Mammary epithelial cell (primary cell): ENCODE measurements at regions of chr18 and their contacts with region 1.

Region 1: DNA sequence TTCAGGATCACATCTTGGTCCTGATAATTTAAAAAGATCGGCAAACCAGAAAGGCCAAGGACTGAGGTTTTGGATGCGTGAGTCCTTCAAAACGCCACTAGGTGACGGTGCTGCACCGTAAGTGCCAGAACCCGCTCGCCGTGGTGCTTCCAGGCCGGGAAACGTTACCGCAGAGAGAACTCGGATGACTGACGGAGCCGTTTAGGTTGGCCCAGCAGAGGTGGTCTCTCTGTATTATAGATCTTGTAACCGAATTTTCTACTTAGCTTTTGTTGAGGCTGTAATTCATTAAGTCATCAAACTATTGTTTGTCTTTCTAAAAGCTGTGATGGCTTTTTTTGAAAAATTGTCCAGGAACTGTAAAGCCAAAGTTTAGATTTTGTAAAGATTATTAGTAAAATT is 39.8 kb upstream of the ADCYAP1 start:
- DNase-seq: peak; percentile 43
- H3K4me3 ChIP-seq: no peak overlapping the region
- H3K27ac ChIP-seq: no peak overlapping the region
- H3K4me1 ChIP-seq: peaks cover 12% of the 10 kb centered on the region
- H3K27me3 ChIP-seq: peaks cover 3% of the 10 kb centered on the region
- CTCF ChIP-seq: peak; percentile 98 to 100

Region 2: DNA sequence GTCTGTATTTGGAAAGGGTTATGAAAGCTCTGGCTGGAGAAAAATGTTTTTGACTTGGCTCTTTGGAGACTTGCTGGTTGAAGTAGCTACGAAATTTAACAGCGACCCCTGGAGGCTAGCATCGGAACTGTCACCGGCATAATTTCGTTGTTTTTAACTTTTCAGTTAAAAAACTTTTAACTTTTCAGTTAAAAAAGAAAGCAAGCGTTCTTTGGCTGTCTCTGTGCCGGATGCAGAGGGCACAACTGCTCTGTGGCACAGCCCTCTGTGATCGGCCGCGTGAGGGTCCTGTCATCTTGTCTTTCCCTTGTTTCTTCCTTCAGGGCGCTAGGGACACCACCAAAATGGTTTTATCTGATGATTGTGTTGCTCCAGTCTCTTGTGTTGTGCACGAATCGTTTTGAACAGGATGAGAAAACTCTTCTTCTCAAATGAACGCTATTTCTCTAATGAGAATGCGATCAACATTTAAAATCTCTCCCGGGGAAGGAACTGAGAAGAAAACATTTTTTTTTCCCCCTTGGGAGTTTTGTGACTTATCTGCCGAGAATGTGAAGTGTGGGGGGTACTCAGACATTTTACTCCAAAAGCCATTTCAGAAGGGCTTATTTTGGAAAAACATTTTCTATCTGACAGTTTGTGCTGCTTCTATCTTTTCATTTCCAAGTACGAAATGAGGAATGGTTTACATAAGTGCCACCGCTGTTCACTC is 96.9 kb after region 1 on chr18:
- CTCF ChIA-PET with region 1: no interaction called
- dilution Hi-C with region 1: no loop called
- in situ Hi-C with region 1: loop called (anchors 10 kb)
- intact Hi-C with region 1: loop called (anchors 1 kb)
- DNase-seq: no peak
- H3K4me3 ChIP-seq: peak overlapping the region in 1 of 3 experiments; percentile 18
- H3K27ac ChIP-seq: no peak overlapping the region
- H3K4me1 ChIP-seq: no peaks in the 10 kb centered on the region
- H3K27me3 ChIP-seq: no peaks in the 10 kb centered on the region
- CTCF ChIP-seq: peak; percentile 83 to 92

Region 3: DNA sequence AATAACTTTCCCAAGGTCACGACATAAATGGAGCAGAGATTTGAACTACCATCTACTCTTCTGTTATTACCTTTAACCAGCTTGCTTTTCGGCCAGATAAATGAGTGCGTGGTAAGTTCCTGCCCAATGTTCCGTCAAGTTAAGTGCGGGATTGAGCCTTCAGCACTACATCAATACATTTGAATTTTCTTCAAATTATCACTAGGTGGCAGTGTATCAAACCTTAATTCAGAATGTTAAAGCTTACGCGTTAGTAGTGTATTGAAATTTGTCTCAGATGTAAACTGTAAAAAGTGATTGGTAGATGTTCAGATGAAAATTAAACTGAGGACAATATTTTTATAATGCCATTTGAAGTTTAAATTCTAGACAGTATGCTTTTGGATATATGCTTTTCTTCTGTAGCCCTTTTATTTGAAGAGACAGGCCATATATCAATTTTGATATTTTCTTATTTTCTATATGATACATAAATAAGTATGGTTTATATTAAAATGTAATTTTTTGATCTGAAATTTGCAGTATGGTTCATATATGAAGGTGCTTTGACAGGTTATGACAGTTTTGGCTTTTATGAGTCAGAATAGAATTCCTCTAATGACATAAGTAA is 721.1 kb after region 1 on chr18:
- CTCF ChIA-PET with region 1: no interaction called
- dilution Hi-C with region 1: no loop called
- in situ Hi-C with region 1: loop called in 1 of 2 experiments (anchors 25 kb)
- intact Hi-C with region 1: loop called (anchors 2 kb)
- DNase-seq: peak; percentile 13
- H3K4me3 ChIP-seq: no peak overlapping the region
- H3K27ac ChIP-seq: no peak overlapping the region
- H3K4me1 ChIP-seq: no peaks in the 10 kb centered on the region
- H3K27me3 ChIP-seq: no peaks in the 10 kb centered on the region
- CTCF ChIP-seq: peak; percentile 25 to 58

Region 4: DNA sequence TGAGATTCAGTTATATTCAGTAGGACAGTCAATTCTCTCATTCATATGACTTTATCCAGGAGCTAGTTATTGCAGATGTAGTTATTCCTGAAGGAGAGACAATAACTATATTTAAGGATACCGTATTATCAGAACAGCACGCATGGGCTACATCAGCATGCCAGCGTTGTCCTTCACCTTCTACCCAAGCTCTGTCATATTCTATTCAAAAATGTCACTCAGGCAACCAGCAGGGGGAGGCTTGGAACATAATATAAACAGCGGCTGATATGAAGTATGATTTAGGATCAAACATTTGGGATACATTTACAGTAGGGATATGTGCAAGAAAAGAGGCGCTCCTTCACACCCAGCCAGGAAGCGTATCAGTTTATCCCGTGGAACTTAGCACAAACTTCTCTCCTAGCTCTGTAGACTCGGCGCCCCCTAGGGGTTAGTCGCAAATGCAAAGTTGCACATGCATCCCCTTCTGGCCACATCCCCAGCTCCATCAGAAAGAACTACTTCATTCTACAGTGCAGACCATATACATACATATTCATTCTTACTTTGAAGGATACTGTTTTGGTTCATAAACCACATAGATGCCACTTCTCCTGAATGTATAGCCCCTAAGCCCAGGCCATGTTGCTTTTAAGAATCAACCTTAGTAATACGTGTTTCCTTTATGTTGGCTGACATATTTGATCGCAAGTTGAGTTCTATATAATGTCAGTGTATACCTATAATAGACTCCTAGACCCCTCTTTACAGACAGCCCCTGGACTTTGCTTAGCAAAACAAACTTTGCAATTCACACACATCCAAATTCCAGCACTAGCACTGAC is 799.2 kb after region 1 on chr18:
- CTCF ChIA-PET with region 1: no interaction called
- dilution Hi-C with region 1: no loop called
- in situ Hi-C with region 1: no loop called
- intact Hi-C with region 1: loop called (anchors 2 kb)
- DNase-seq: peak; percentile 20
- H3K4me3 ChIP-seq: no peak overlapping the region
- H3K27ac ChIP-seq: no peak overlapping the region
- H3K4me1 ChIP-seq: no peaks in the 10 kb centered on the region
- H3K27me3 ChIP-seq: no peaks in the 10 kb centered on the region
- CTCF ChIP-seq: peak; percentile 53 to 65

Region 5: GRCh38 chr18:2547477-2548087 is 1682.7 kb after region 1 on chr18:
- CTCF ChIA-PET with region 1: no interaction called
- dilution Hi-C with region 1: no loop called
- in situ Hi-C with region 1: loop called in 1 of 2 experiments (anchors 25 kb)
- intact Hi-C with region 1: loop called (anchors 10 kb)
- DNase-seq: peak; percentile 19
- H3K4me3 ChIP-seq: no peak overlapping the region
- H3K27ac ChIP-seq: no peak overlapping the region
- H3K4me1 ChIP-seq: no peaks in the 10 kb centered on the region
- H3K27me3 ChIP-seq: no peaks in the 10 kb centered on the region
- CTCF ChIP-seq: peak; percentile 39 to 42

Region 6: DNA sequence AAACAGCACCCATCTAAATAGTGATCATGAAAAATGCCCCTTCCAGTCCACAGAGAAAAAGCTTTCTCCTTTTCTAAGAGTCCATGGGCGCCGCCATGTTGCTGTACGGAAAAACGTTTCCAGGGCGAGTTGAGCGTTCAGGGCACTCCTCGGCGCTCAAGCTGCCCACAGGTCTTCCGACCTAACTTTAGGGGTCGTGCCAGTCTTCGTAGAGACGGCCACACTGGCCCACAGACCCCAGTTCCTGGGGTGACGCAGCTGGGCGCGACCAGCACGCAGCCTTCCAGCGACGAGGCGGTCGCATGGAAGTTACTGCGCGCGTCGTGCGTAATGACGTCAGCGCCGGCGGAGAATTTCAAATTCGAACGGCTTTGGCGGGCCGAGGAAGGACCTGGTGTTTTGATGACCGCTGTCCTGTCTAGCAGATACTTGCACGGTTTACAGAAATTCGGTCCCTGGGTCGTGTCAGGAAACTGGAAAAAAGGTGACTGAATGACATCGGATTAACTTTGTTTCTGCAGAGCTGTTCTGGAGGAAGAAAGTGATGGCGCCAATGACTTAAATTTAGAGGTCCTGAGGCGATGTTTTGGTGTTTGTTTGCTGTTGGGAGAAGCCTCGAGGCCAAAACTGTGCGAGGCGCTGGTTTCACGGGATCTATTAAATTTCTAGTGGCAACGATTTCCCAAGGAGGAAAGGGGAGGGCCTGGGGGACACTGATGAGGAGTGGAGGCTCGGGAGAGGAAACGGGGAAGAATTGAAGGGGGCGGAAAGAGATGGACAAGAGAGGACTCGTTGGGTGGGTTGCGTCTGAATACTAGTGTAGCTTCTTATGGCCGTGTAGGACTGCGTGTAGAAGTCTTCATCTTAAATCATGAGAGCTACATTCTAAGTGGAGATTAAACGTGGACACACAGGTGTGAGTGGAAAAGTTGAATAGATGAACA is 1706.6 kb after region 1 on chr18 and contains the starts of genes METTL4 and NDC80:
- CTCF ChIA-PET with region 1: interaction called, 3 read pairs
- dilution Hi-C with region 1: no loop called
- in situ Hi-C with region 1: loop called in 1 of 2 experiments (anchors 25 kb)
- intact Hi-C with region 1: no loop called
- DNase-seq: peak; percentile 88
- H3K4me3 ChIP-seq: peak within 1 kb of the TSS; percentile 81 to 97 (median 87)
- H3K27ac ChIP-seq: peak within 1 kb of the TSS; percentile 98
- H3K4me1 ChIP-seq: peaks cover 10% of the 10 kb centered on the region
- H3K27me3 ChIP-seq: no peaks in the 10 kb centered on the region
- CTCF ChIP-seq: no peak
- total RNA-seq, gene METTL4: 8.2 to 14.5 TPM
- total RNA-seq, gene NDC80: 1.7 to 29.8 TPM